A673 (cell line): ENCODE measurements at regions of chr1 and their contacts with region 1.

Region 1: GRCh38 chr1:113868387-113869083 is 3.0 kb downstream of the PTPN22 start:
- DNase-seq: no peak
- H3K4me3 ChIP-seq: no peak overlapping the region
- H3K27ac ChIP-seq: no peak overlapping the region
- H3K4me1 ChIP-seq: no peaks in the 10 kb centered on the region
- H3K27me3 ChIP-seq: no peaks in the 10 kb centered on the region
- CTCF ChIP-seq: no peak

Region 2: GRCh38 chr1:114320586-114320985 is 452.1 kb after region 1 on chr1:
- CTCF ChIA-PET with region 1: no interaction called
- POLR2A ChIA-PET with region 1: interaction called, 12 read pairs
- intact Hi-C with region 1: no loop called
- DNase-seq: no peak
- H3K4me3 ChIP-seq: no peak overlapping the region
- H3K27ac ChIP-seq: no peak overlapping the region
- H3K4me1 ChIP-seq: no peaks in the 10 kb centered on the region
- H3K27me3 ChIP-seq: no peaks in the 10 kb centered on the region
- CTCF ChIP-seq: no peak